GM18951 (cell line): ENCODE measurements at regions of chr22 and their contacts with region 1.

Region 1: DNA sequence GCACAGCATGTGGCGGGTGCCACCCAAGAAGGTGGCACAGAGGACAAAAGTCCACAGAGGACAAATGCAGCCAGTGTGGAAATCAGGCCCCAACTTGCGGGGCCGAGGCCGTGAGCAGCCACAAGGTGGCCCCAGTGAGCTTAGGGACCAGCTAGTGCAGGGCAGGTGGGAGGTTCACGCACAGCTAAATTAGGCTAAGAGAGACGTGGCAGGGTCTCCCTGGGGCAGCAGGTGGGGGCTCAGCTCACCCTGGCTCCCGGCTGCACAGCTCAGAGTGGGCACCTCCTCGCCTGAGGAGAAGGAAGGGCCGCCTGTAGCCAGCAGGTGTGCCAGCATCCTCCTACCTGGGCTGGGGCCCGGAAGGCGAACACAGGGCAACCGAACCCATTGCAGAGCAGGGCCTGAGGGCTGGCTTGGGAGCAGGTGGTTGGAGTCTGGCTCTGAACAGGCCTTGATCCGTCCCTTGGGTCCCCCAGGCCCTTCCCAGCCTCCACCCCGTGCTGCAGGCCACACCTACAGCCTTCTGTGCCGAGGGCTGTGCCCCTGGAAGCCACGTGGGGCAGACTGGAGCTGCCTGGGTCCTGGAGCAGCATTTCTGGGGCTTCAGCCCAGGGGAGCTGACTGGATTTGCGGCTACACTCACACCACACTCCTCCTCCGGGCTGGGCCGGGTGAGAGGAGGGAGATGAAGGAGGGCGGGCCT is 26.1 kb upstream of the CELSR1 start:
- POLR2A ChIP-seq: no peak

Region 2: DNA sequence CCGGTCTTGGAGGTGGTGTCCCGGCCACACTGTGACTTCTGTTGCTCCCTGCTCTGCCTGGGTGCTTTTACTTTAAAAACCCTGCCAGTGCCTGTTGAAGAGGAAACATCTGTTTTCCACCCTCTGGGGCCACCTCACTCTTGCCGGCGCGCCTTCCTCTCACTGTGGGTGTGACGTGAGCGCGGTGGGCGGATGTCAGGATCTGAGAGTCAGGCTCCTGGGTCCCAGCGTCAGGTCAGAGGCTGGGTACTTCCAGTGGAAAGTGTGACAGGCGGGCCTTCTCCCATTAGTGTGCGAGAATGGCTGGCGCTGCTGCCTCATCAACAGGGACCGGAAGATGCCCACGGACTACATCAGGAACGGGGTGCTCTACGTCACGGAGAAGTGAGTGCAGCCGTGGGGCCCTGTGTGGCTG is 110.8 kb after region 1 on chr22:
- in situ Hi-C with region 1: loop called (anchors 10 kb)
- POLR2A ChIP-seq: no peak

Region 3: GRCh38 chr22:46748908-46749675 is 185.6 kb after region 1 on chr22:
- in situ Hi-C with region 1: no loop called
- POLR2A ChIP-seq: no peak